ENCODE measurements at regions of chr17 and their contacts with region 1.

Region 1: DNA sequence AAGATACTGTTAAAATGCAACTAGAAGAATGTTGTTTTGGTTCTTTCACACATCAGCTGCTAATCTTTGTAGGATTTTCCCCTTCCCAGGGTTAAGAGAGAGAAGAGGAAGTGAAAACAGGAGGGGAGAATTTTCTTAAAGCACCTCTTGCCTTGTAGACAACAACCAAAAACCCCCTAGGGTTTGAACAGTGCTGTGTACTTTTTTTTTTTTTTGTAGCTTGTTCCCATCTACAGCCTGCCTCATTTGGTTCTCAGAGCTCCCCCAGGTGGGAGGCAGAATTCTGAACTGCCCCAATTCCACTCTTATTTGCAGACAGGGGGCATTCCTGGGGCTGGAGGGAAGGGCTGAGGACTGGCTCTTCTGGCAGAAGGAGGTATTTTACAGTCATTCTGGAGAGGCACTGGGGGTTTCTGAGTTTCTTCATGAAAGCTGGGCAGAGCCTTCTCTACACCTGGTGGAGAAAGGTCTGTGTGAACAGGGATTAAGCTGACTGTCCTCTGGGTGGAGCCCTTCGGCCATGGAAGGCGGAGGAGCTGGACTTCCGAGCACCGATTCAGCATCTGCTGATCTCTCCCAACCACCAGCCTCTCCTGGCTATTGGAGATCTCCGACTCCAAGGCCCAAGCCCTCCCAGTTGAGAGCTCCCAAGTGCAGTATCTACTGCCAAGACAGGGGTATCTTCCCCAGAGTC is 32.2 kb downstream of the SMARCE1 start:
- DNase-seq: peak; percentile 62
- H3K4me3 Mint-ChIP-seq: peak overlapping the region; percentile 24
- H3K27ac Mint-ChIP-seq: peak overlapping the region; percentile 77
- H3K4me1 Mint-ChIP-seq: peaks cover 86% of the 10 kb centered on the region
- H3K27me3 Mint-ChIP-seq: peaks cover 17% of the 10 kb centered on the region

Region 2: DNA sequence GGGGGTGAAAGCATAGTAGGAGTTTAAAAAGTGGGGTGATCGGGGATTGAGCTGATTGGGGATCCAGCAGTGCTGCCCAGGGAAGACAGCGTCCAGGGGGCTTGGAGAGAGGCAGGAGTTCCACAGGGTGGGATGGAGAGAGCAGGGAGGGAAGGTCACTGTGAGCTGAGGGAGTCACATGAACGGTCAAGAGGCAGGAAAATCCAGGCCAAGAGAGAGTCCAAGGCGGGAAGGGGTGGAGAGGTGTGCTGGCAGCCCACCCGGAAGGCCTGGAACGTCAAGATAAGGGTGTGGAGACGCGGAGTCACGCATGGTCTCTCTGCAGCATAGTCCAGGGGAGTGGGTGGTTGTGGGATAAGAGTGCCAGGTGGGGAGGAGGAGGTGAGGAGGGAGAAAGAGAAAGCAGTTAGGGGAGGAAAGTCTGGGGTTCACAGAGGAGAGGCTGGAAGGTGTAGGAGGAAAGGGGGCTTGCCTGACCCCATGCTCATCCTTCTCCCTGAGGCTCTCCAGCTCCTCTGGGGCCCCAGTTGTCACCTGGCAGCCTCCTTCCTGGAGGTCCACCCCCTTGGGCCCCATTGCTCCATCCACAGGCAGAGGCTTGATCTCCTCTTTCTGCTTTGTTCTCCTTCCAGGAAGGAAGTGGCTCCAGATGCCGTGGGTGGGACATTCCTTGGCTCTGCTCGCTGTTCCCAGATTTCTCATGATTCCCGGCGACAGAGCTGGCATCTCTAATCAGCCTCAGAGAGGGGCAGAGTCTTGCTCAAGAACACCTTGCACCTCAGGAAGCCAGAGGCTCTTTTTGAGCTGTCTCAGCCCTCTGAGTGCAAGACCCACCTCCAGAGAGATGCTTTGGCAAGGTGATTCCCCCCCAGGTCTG is 78.9 kb before region 1 on chr17:
- CTCF ChIA-PET with region 1: interaction called, 12 read pairs
- DNase-seq: no peak
- H3K4me3 Mint-ChIP-seq: no peak overlapping the region
- H3K27ac Mint-ChIP-seq: no peak overlapping the region
- H3K4me1 Mint-ChIP-seq: peaks cover 98% of the 10 kb centered on the region
- H3K27me3 Mint-ChIP-seq: peaks cover 20% of the 10 kb centered on the region

Region 3: DNA sequence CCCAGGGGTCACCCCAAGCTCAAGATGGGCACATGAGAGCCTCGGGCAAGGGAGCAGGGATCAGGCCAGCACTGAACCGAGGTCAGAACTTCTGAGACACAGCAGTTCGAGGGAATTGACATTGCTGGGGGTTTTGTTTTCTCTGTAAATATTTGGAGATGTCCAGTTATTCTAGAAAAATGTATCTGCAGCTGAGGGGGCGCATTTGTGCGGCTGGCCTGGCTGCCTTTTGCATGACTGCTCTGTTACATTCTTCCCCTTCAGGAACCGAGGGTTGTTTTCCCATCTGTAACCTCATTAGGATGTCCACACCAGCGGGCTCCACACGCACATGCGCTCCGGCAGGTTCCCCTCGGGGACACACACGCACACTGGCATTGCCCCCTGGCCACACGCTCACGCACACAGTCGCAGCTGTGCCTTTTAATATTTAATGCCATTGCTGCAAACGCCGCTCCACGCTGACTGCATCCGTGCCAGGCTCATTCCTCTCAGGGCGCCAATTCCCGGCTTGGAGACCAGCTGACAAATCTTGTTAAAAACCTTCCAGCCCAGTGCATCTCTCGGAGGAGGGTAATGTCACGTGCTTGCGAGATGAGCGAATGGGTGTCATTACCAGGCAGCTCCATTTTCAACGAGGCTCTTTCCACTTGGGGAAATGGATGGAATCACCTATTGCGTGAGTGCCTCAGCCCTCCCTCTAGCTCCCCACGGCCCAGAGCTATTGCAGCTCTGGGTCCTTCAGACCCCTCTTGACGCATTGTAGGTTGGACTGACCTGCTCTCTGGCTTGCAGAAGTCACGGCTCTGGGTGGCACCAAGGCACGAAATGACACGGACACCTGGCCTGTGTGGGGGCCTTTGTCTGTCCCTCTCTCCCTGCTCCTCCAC is 63.3 kb before region 1 on chr17:
- CTCF ChIA-PET with region 1: interaction called, 14 read pairs
- DNase-seq: peak; percentile 19
- H3K4me3 Mint-ChIP-seq: no peak overlapping the region
- H3K27ac Mint-ChIP-seq: peak overlapping the region; percentile 75
- H3K4me1 Mint-ChIP-seq: peaks cover 100% of the 10 kb centered on the region
- H3K27me3 Mint-ChIP-seq: peaks cover 5% of the 10 kb centered on the region

Region 4: DNA sequence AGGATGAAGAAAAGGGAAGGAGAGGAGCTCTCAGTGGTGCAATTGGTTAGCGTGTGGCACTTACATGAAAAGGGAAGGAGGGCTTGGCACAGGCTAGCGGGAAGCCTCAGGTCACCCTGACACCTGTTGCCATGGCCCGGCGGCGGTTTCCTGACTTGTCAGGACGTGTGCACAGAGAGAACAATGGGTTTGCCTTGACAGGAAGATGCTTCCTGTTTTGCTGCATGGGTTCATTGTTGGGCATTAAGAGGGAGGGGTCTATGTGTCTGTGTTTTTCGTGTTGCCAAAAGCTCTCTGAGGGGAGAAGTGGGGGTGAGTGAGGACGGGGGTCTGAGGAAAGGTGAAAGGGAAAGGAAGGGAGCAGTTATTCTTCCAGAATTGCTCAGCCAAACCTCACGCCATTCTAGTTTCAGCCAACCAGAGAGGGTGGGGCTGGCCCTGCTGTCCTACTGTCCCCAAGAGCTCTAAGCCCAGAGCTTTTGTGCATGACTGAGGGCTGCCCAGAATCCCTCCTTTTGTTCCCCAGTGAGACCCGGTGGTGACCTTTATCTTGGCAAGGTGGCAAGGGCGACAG is 33.0 kb before region 1 on chr17:
- CTCF ChIA-PET with region 1: interaction called, 13 read pairs
- DNase-seq: peak; percentile 88
- H3K4me3 Mint-ChIP-seq: peak overlapping the region; percentile 19
- H3K27ac Mint-ChIP-seq: peak overlapping the region; percentile 87
- H3K4me1 Mint-ChIP-seq: peaks cover 92% of the 10 kb centered on the region
- H3K27me3 Mint-ChIP-seq: no peaks in the 10 kb centered on the region

Region 5: DNA sequence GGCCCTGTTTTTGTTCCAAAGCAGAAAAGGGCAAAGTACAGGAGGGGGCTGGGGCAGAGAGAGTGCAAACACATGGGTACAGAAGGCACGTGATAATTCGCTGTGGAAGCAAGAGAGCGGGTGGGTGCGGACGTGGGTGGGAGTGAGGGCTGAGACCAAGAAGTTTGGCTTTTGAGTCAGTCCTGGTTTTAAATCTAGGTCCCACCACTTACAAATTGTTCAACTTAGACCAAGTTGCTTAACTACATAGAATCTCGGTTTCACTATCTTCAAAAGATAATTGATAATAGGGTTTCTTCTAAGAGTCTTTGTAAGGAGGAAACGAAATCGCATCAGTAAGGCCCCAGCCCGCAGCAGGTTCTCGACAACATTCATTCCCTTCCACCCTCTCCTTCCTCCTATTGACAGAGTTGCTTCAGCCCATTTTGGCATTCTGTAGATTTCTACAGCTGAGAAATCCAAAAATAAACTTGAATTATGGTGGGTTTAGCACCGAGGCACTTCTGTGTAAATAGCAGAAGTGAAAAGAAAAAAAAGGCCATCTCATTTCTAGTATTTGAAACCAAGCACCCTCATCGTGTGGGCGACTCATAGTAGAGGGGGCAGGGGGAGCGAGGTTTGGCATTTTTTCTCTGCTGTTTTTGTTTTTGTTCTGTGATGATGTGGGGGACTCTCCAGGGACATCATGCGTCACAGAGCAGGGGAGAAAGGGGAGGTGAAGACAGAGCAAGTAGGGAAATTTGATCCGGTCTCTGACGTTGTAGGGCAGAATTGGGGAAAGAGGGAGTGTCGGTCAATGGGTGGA is 16.6 kb before region 1 on chr17:
- CTCF ChIA-PET with region 1: interaction called, 22 read pairs
- DNase-seq: peak; percentile 75
- H3K4me3 Mint-ChIP-seq: peak overlapping the region; percentile 22
- H3K27ac Mint-ChIP-seq: peak overlapping the region; percentile 94
- H3K4me1 Mint-ChIP-seq: peaks cover 91% of the 10 kb centered on the region
- H3K27me3 Mint-ChIP-seq: no peaks in the 10 kb centered on the region

Measured in activated naive CD4-positive, alpha-beta T cell treated with anti-CD3 and anti-CD28 coated beads, Interleukin-2, amount 10 ng/mL, durations not matched to agents 7 days and 5 days (primary cell).